ENCODE measurements at regions of chr18 and their contacts with region 1.

Region 1: DNA sequence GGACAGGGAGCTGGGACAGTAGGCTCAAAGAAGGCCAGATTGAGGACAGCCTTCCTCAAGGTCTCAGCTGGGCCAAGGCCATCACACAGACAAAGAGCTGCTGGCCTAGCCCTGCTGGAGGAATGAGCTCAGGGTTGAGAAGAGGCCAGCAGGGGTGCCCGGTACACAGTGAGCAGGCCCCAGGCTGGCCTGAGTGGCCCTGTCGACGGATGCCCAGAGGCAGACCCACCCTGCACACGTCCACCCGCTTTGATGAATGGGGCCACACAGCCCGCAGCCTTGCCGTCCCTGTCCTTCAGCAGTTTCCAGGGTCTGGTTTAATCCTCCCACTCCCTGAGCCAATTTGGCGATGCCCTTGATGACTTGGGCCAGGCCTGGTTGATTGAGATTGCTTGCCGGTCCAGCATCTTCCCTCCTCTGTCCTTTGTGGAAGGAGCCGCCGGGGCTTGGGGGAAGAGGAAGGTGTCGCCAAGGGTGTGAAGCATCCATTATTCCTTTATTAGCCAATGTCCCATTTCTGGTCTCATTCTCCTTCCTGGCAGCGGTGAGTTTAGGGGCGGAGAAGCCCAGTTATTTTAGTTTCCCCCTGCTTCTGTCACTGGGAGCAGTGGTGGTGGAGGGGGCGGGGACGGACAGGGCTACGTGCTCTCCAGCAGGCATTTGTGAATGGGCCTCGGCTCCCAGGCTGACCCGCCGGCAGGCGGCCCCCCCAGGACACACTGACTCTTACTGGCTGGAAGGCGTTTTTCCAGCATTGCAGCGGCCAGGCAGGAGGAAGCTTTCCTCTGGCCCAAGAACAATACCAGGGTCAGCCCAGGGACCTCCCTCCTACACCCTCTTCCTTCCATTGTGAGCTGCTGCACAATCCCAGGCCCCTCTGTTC is 141.7 kb downstream of the CTIF start:
- DNase-seq: peak; percentile 86 to 93
- ATAC-seq: peak; percentile 82 to 95 (median 93)
- H3K4me3 ChIP-seq: no peak overlapping the region
- H3K27ac ChIP-seq: peak overlapping the region; percentile 70 to 93 (median 86)
- H3K4me1 ChIP-seq: peaks cover 16 to 96% (median 63%) of the 10 kb centered on the region in 9 donors
- H3K27me3 ChIP-seq: no peaks in the 10 kb centered on the region
- CTCF ChIP-seq: peak in 7 of 9 donors; percentile 10 to 60 (median 42)

Region 2: GRCh38 chr18:48711651-48712486 is 31.3 kb after region 1 on chr18:
- intact Hi-C with region 1: loop called in 1 of 10 experiments (anchors 2 kb)
- DNase-seq: peak; percentile 28 to 69
- ATAC-seq: peak; percentile 51 to 76 (median 68)
- H3K4me3 ChIP-seq: no peak overlapping the region
- H3K27ac ChIP-seq: peak overlapping the region in 7 of 10 donors; percentile 14 to 92 (median 70)
- H3K4me1 ChIP-seq: peaks cover 23 to 86% (median 59%) of the 10 kb centered on the region in 9 donors
- H3K27me3 ChIP-seq: no peaks in the 10 kb centered on the region
- CTCF ChIP-seq: peak in 8 of 9 donors; percentile 50 to 75 (median 66)

Region 3: DNA sequence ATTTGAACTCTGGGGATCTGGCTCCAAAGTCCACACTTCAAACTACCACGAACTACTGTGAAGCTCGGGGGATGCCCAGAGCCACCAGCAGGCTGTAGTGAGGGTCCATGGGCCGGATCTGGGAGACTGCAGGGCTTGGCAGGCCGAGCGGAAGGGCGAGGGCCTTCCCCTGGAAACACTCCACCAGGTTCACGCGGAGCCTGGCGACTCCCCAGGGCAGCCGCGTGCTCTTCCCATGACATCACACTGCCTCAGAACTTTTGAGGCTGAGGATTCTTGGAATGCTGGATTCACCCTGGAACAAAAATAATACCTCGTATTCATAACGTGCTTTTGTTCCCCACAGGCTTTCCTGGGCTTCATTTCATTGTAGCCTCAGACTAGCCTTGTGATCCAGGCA is 69.2 kb after region 1 on chr18:
- intact Hi-C with region 1: loop called in 3 of 10 experiments (anchors 2 to 10 kb)
- DNase-seq: peak; percentile 78 to 83
- ATAC-seq: peak; percentile 73 to 97 (median 92)
- H3K4me3 ChIP-seq: no peak overlapping the region
- H3K27ac ChIP-seq: peak overlapping the region in 9 of 10 donors; percentile 9 to 88 (median 73)
- H3K4me1 ChIP-seq: peaks cover 11 to 56% (median 40%) of the 10 kb centered on the region in 9 donors
- H3K27me3 ChIP-seq: no peaks in the 10 kb centered on the region
- CTCF ChIP-seq: peak in 8 of 9 donors; percentile 27 to 72 (median 54)

Region 4: DNA sequence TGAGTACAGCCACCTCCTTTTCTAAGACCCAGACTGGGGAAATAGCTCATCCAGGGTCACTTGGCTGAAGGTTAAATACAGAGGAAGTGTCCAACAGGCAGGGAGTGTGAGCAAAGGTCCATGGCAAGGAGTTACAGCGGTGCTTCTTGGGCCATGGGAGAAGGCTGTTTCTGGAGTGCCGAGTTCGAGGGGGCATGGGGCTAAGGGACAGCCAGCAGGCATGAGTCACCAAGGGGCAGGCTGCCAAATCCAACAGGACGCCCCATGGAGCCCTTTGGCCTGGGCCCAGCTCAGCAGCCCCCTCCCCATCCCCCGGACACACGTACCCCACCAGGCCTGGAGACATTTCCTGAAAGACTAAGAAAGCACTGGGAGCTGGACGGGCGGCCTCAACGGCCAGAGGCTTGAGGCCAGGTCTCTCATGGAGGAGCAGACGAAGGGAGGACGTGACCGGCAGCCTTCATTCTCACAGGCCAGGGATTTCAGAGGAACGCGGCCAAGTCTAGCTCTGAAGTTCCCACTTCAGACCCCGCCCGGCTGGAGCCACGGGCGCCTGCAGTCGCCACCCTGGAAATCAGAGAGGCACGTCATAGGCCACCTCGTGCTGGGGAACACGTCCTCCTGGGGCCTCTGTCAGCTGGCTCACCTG is 109.8 kb after region 1 on chr18:
- intact Hi-C with region 1: loop called in 2 of 10 experiments (anchors 2 kb)
- DNase-seq: peak; percentile 89 to 93
- ATAC-seq: peak; percentile 72 to 91 (median 89)
- H3K4me3 ChIP-seq: no peak overlapping the region
- H3K27ac ChIP-seq: peak overlapping the region; percentile 68 to 96 (median 92)
- H3K4me1 ChIP-seq: peaks cover 19 to 81% (median 48%) of the 10 kb centered on the region in 9 donors
- H3K27me3 ChIP-seq: no peaks in the 10 kb centered on the region
- CTCF ChIP-seq: no peak

Region 5: GRCh38 chr18:48842259-48843061 is 161.9 kb after region 1 on chr18:
- intact Hi-C with region 1: loop called in 2 of 10 experiments (anchors 2 to 10 kb)
- DNase-seq: peak; percentile 42 to 65
- ATAC-seq: peak; percentile 37 to 85 (median 76)
- H3K4me3 ChIP-seq: no peak overlapping the region
- H3K27ac ChIP-seq: peak overlapping the region; percentile 72 to 94 (median 84)
- H3K4me1 ChIP-seq: peaks cover 12 to 78% (median 63%) of the 10 kb centered on the region in 9 donors
- H3K27me3 ChIP-seq: no peaks in the 10 kb centered on the region
- CTCF ChIP-seq: no peak

Measured in heart right ventricle (tissue), 16 donors.